PC-9 (cell line): ENCODE measurements at regions of chr7 and their contacts with region 1.

Region 1: GRCh38 chr7:122896509-122896908 is 10.2 kb upstream of the CADPS2 start:
- DNase-seq: no peak
- H3K4me3 ChIP-seq: no peak overlapping the region
- H3K27ac ChIP-seq: no peak overlapping the region
- H3K4me1 ChIP-seq: 0 out of 2 replicates have a peak, but pooled peaks cover 5% of the 10 kb centered on the region
- H3K27me3 ChIP-seq: no peaks in the 10 kb centered on the region
- CTCF ChIP-seq: peak; percentile 35; the same call in 1 of the 2 replicates

Region 2: GRCh38 chr7:122225874-122226273 is 670.6 kb before region 1 on chr7:
- CTCF ChIA-PET with region 1: no interaction called
- POLR2A ChIA-PET with region 1: no interaction called
- intact Hi-C with region 1: no loop called
- DNase-seq: no peak
- H3K4me3 ChIP-seq: no peak overlapping the region
- H3K27ac ChIP-seq: no peak overlapping the region
- H3K4me1 ChIP-seq: no peaks in the 10 kb centered on the region
- H3K27me3 ChIP-seq: no peaks in the 10 kb centered on the region
- CTCF ChIP-seq: no peak

Region 3: GRCh38 chr7:122616951-122617350 is 279.6 kb before region 1 on chr7:
- CTCF ChIA-PET with region 1: no interaction called
- POLR2A ChIA-PET with region 1: interaction called, 36 read pairs
- intact Hi-C with region 1: no loop called
- DNase-seq: no peak
- H3K4me3 ChIP-seq: no peak overlapping the region
- H3K27ac ChIP-seq: no peak overlapping the region
- H3K4me1 ChIP-seq: no peaks in the 10 kb centered on the region
- H3K27me3 ChIP-seq: no peaks in the 10 kb centered on the region
- CTCF ChIP-seq: no peak

Region 4: GRCh38 chr7:122944682-122945303 is 48.3 kb after region 1 on chr7:
- CTCF ChIA-PET with region 1: no interaction called
- POLR2A ChIA-PET with region 1: no interaction called
- intact Hi-C with region 1: no loop called
- DNase-seq: no peak
- H3K4me3 ChIP-seq: no peak overlapping the region
- H3K27ac ChIP-seq: no peak overlapping the region
- H3K4me1 ChIP-seq: no peaks in the 10 kb centered on the region
- H3K27me3 ChIP-seq: no peaks in the 10 kb centered on the region
- CTCF ChIP-seq: no peak

Region 5: GRCh38 chr7:123440101-123440548 is 543.6 kb after region 1 on chr7:
- CTCF ChIA-PET with region 1: no interaction called
- POLR2A ChIA-PET with region 1: no interaction called
- intact Hi-C with region 1: no loop called
- DNase-seq: no peak
- H3K4me3 ChIP-seq: no peak overlapping the region
- H3K27ac ChIP-seq: no peak overlapping the region
- H3K4me1 ChIP-seq: no peaks in the 10 kb centered on the region
- H3K27me3 ChIP-seq: no peaks in the 10 kb centered on the region
- CTCF ChIP-seq: no peak